ENCODE measurements at regions of chr5 and their contacts with region 1.

Region 1: DNA sequence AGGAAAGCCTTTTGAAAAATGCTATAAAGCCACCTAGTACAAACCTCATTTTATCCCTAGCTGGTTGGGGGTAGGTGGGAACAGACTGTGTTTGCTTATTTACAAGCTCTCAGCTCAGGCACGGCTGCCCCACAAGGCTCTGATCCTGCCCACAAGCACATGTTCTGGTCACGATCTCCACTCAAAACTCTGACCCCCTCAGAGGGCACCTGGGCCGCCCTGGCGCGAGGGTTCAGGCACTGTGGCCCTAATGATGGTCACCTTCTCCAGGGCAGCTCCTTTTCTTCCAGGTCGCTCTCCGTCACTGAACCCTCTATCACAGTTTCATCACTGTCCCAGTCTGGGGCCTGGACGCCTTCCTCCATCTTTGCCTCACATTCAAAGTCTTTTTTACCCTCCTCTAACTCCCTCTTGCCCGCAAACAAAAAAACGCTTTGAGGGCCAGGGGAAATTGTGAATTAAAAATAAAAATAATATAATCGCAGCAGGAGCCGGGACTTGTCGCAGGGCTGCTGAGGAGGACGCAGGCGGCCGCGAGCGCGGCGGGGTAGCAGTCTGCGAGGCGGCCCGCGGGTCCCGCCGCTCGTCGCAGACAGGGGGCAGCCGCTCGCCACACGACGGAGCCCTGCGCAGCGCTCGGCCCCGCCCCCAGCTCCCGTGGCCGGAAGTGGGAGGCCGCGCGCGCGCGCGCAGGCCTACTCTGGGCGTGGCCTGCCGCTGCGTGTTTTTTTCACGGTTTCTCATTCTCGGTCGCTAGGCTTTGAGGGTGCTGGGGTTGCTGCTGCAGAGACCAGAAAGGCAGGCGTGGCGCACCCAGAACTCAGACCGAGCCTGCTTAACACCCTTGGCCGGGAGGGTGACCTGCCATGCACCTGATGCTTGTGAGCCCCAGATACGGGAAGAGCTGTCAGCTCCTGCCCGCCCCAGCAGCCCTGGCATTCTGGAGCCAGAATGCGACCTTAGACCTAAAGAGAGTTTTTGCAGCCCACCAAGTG is at the start of gene ANKRD31:
- DNase-seq: peak; percentile 72 to 91 (median 80)
- H3K4me3 ChIP-seq: peak within 1 kb of the TSS; percentile 63 to 96 (median 76)
- H3K27ac ChIP-seq: peak within 1 kb of the TSS; percentile 51 to 95 (median 86)
- H3K27me3 ChIP-seq: no peaks in the 10 kb centered on the region
- CTCF ChIP-seq: peak; percentile 70 to 99 (median 92)
- total RNA-seq, gene ANKRD31: 0.32 to 1.7 (median 0.93) TPM

Region 2: GRCh38 chr5:74934949-74935751 is 301.5 kb before region 1 on chr5:
- intact Hi-C with region 1: loop called in 1 of 2 experiments (anchors 10 kb)
- DNase-seq: peak in 1 of 10 donors; percentile 18
- H3K4me3 ChIP-seq: peak overlapping the region in 2 of 59 donors; percentile 9 to 26
- H3K27ac ChIP-seq: no peak overlapping the region
- H3K27me3 ChIP-seq: peaks cover 0 to 19% (median 0%) of the 10 kb centered on the region in 45 donors
- CTCF ChIP-seq: peak in 48 of 56 donors; percentile 19 to 56 (median 36)

Region 3: DNA sequence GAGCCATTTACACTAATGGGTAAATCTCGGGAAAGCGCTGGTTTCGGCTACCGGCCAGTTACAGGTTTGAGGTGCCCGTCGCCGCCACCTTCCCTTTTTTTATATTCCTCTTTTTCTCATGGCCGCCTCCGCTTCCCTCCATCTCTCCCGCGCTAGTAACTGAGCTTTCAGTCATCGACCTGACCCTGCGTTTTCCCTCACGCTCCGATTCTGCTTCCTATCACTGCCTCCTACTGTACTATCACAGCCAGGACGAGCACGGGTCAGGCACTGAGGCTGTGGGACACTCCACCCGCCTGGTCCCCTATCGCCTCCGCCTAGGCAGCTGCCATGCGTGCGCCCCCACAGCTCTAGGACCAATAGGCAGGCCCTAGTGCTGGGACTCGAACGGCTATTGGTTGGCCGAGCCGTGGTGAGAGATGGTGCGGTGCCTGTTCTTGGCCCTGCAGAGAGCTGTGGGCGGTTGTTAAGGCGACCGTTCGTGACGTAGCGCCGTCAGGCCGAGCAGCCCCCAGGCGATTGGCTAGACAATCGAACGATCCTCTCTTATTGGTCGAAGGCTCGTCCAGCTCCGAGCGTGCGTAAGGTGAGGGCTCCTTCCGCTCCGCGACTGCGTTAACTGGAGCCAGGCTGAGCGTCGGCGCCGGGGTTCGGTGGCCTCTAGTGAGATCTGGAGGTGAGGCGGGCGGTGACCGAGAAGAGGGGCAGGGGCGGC is 100.2 kb after region 1 on chr5 and contains the start of gene HMGCR:
- intact Hi-C with region 1: loop called (anchors 1 to 2 kb)
- DNase-seq: peak; percentile 97 to 100 (median 99)
- H3K4me3 ChIP-seq: peak within 1 kb of the TSS; percentile 60 to 100 (median 93)
- H3K27ac ChIP-seq: peak within 1 kb of the TSS; percentile 59 to 98 (median 94)
- H3K27me3 ChIP-seq: no peaks in the 10 kb centered on the region
- CTCF ChIP-seq: peak in 37 of 56 donors; percentile 3 to 57 (median 30)
- total RNA-seq, gene HMGCR: 34.4 to 162 (median 84.8) TPM

Region 4: DNA sequence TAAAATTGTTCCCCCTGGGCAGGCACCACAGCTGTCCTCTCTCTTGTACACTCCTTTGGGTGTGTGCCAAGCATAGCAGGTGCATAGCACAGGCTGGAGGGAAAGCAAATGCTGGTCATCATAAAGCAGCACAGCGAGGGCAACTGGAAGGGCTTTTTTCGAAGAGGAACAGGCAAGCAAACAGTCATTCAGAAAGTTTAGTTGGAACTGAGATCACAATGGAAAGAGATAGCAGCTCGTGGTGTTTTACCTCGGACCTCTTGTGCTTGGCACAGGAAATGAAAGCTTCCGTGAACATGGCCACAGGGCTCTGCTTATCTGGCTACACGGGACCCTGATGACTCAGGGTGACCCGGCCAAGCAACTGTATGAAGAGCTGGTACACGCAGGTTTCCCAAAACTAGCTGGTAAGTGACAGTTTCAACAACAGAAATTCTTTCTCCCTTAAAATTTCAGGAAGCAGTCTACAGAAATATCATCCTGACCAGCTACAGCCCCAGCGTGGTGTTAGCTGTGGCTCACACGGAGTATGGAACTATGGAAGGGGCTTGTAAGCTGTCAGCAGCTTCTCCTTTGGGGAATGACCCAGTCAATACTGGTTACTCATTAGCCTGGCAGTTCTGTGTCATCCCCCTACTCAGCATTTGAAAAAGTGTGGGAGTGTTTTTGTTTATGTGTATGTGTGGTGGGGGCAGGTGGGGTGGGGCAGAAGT is 432.5 kb after region 1 on chr5:
- intact Hi-C with region 1: loop called in 1 of 2 experiments (anchors 5 kb)
- DNase-seq: peak in 1 of 10 donors; percentile 26
- H3K4me3 ChIP-seq: peak overlapping the region in 27 of 59 donors; percentile 1 to 42 (median 22)
- H3K27ac ChIP-seq: peak overlapping the region in 5 of 59 donors; percentile 8 to 55 (median 15)
- H3K27me3 ChIP-seq: no peaks in the 10 kb centered on the region
- CTCF ChIP-seq: no peak

Measured in dorsolateral prefrontal cortex (tissue), 120 donors.